Ovary (tissue), 10 donors: ENCODE measurements at regions of chr17 and their contacts with region 1.

Region 1: DNA sequence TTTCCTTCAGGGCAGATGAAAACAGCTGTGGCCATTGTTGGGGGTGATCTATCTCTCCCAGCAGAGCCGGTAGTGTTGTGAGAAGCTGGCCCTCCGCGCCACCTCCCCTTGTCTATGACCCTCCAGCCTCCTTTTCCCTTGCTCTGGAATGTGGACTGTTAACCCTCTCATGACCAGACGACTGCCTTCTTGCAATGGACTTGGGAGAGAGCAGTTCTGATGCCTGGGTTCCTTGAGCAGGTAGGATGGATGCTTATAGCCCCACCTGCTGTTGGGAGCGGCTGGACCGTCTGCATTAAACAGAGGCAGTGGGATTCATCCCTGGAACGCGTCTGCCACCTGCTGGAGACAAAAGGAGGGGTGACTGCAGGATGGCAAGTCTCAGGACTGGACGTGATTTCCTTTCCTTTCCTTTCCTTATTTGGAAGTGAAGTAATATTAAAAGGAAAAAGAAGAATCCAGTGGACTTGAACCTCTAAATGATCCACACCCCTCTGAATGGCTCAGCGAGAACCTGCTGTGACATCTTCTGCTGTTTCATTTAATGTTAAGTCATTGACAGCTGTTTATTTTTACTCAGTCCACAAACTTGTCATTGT is 1.8 kb upstream of the SOST start:
- DNase-seq: peak; percentile 84 to 93 (median 90)
- H3K4me3 ChIP-seq: no peak overlapping the region
- H3K27ac ChIP-seq: no peak overlapping the region
- H3K4me1 ChIP-seq: peaks cover 2% of the 10 kb centered on the region
- H3K27me3 ChIP-seq: no peaks in the 10 kb centered on the region
- CTCF ChIP-seq: peak; percentile 85 to 94 (median 88)
- EP300 ChIP-seq: no peak
- POLR2A ChIP-seq: no peak

Region 2: GRCh38 chr17:43576563-43577229 is 183.7 kb before region 1 on chr17:
- intact Hi-C with region 1: loop called in 3 of 4 experiments (anchors 10 kb)
- DNase-seq: peak; percentile 49 to 82 (median 75)
- H3K4me3 ChIP-seq: no peak overlapping the region
- H3K27ac ChIP-seq: no peak overlapping the region
- H3K4me1 ChIP-seq: no peaks in the 10 kb centered on the region
- H3K27me3 ChIP-seq: no peaks in the 10 kb centered on the region
- CTCF ChIP-seq: peak; percentile 69 to 89 (median 83)
- EP300 ChIP-seq: no peak
- POLR2A ChIP-seq: no peak

Region 3: DNA sequence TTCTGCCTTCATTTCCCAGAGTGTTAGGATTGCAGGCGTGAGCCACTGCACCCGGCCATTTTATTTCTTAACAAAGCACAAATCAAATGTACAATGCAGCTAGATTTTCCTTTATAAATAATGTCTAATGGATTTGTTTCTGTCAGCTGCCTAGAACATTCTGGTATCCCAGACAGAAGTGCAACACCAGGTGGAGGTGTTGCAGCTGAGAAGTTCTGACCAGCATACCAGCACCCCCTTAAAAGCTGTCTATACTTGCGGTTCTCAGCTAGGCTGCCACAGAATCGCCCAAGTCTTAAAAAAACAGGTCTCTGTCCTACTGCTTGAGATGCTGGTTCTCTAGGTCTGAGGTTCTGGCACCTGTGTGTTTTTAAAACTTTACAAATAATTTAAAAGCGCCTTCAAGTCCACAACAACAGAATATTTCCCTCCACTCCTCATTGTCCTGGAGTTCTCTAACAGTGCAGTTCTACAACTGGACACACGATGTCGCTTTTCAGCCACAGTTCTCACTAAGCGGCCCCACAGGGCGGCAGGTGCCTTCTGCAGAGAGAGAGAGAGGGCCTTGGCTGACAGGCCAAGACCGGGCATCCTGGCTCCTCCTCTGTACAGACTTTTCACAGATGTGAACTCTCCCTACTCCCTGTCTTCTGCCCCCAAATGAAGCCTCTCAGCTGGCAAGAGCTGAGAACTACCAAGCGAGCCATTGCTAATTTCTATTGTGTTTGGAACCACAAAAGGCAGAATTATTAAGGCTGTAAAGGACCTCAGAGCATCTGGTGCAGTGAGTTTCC is 66.1 kb before region 1 on chr17:
- intact Hi-C with region 1: loop called (anchors 2 to 5 kb)
- DNase-seq: peak; percentile 63 to 74 (median 68)
- H3K4me3 ChIP-seq: no peak overlapping the region
- H3K27ac ChIP-seq: no peak overlapping the region
- H3K4me1 ChIP-seq: no peaks in the 10 kb centered on the region
- H3K27me3 ChIP-seq: no peaks in the 10 kb centered on the region
- CTCF ChIP-seq: peak; percentile 58 to 81 (median 77)
- EP300 ChIP-seq: no peak
- POLR2A ChIP-seq: no peak

Region 4: GRCh38 chr17:43713494-43714162 is 46.7 kb before region 1 on chr17:
- intact Hi-C with region 1: loop called in 1 of 4 experiments (anchors 5 kb)
- DNase-seq: no peak
- H3K4me3 ChIP-seq: peak overlapping the region; percentile 29
- H3K27ac ChIP-seq: no peak overlapping the region
- H3K4me1 ChIP-seq: peaks cover 2% of the 10 kb centered on the region
- H3K27me3 ChIP-seq: no peaks in the 10 kb centered on the region
- CTCF ChIP-seq: no peak
- EP300 ChIP-seq: no peak
- POLR2A ChIP-seq: no peak

Region 5: GRCh38 chr17:43832976-43833829 is 72.8 kb after region 1 on chr17 and contains the start of gene MPP3:
- intact Hi-C with region 1: no loop called
- DNase-seq: peak; percentile 59 to 74 (median 64)
- H3K4me3 ChIP-seq: peak within 1 kb of the TSS; percentile 63
- H3K27ac ChIP-seq: no peak within 1 kb of the TSS
- H3K4me1 ChIP-seq: peaks cover 7% of the 10 kb centered on the region
- H3K27me3 ChIP-seq: no peaks in the 10 kb centered on the region
- CTCF ChIP-seq: no peak
- EP300 ChIP-seq: no peak
- POLR2A ChIP-seq: peak; percentile 29
- total RNA-seq, gene MPP3: 2.7 to 17.2 (median 4.4) TPM